PC-9 (cell line): ENCODE measurements at regions of chr17 and their contacts with region 1.

Region 1: GRCh38 chr17:7745748-7746470 is 28.4 kb downstream of the DNAH2 start:
- DNase-seq: peak; percentile 80 to 87
- H3K4me3 ChIP-seq: no peak overlapping the region
- H3K27ac ChIP-seq: peak overlapping the region; percentile 76
- H3K4me1 ChIP-seq: peaks cover 57% of the 10 kb centered on the region
- H3K27me3 ChIP-seq: no peaks in the 10 kb centered on the region
- CTCF ChIP-seq: peak; percentile 28

Region 2: DNA sequence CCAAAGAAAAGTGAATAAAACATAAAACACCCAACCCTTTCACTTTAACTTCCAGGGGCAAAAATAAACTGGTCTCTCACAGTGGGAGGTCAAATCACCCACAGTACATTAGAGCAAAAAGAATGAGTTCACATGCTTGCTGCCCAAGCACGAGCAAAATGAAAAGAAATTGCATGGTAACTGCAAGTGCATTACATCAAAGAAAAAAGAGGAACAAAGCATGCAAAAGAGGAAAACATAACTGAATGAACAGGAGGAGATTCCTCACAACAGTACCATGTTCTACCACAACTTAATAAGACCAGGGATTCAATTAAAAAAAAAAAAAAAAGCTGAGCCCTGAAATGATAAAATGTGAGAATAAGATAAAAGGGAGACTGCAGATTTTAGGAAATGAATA is 16.1 kb before region 1 on chr17:
- CTCF ChIA-PET with region 1: interaction called, 18 read pairs
- POLR2A ChIA-PET with region 1: no interaction called
- intact Hi-C with region 1: no loop called
- DNase-seq: no peak
- H3K4me3 ChIP-seq: no peak overlapping the region
- H3K27ac ChIP-seq: no peak overlapping the region
- H3K4me1 ChIP-seq: no peaks in the 10 kb centered on the region
- H3K27me3 ChIP-seq: no peaks in the 10 kb centered on the region
- CTCF ChIP-seq: no peak

Region 3: DNA sequence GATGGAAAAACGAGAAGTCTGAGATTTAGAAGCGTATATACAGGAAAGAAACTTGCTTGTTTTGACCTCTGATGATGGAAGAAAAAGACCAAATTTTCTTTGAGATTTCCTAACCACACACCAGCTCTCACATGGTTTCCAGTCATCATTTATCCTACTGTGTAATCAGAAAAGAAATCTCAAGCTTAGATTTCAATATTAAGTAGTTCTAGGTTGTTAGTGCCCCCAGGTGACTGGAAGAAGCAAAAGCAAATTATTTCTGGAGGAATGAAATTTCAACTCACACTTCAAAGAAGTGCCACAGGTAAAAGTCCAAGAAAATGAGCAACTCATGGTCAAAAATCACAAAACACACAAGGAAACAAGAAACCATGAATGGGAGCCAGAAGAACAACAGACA is 36.3 kb after region 1 on chr17:
- CTCF ChIA-PET with region 1: interaction called, 7 read pairs
- POLR2A ChIA-PET with region 1: no interaction called
- intact Hi-C with region 1: loop called (anchors 1 kb)
- DNase-seq: peak in 1 of 2 experiments; percentile 42
- H3K4me3 ChIP-seq: no peak overlapping the region
- H3K27ac ChIP-seq: no peak overlapping the region
- H3K4me1 ChIP-seq: no peaks in the 10 kb centered on the region
- H3K27me3 ChIP-seq: no peaks in the 10 kb centered on the region
- CTCF ChIP-seq: peak; percentile 56

Region 4: GRCh38 chr17:7856883-7857723 is 111.2 kb after region 1 on chr17 and contains the start of gene NAA38:
- CTCF ChIA-PET with region 1: no interaction called
- POLR2A ChIA-PET with region 1: no interaction called
- intact Hi-C with region 1: loop called (anchors 1 kb)
- DNase-seq: peak; percentile 96 to 97
- H3K4me3 ChIP-seq: peak within 1 kb of the TSS; percentile 97
- H3K27ac ChIP-seq: peak within 1 kb of the TSS; percentile 79
- H3K4me1 ChIP-seq: peaks cover 13% of the 10 kb centered on the region
- H3K27me3 ChIP-seq: no peaks in the 10 kb centered on the region
- CTCF ChIP-seq: no peak
- total RNA-seq, gene NAA38: 159 and 176 TPM in 2 replicates

Region 5: GRCh38 chr17:7989781-7990655 is 244.1 kb after region 1 on chr17:
- CTCF ChIA-PET with region 1: interaction called, 10 read pairs
- POLR2A ChIA-PET with region 1: no interaction called
- intact Hi-C with region 1: loop called (anchors 1 kb)
- DNase-seq: peak; percentile 40 to 92
- H3K4me3 ChIP-seq: peak overlapping the region; percentile 62
- H3K27ac ChIP-seq: no peak overlapping the region
- H3K4me1 ChIP-seq: no peaks in the 10 kb centered on the region; the same call in 1 of the 2 replicates
- H3K27me3 ChIP-seq: no peaks in the 10 kb centered on the region
- CTCF ChIP-seq: peak; percentile 83

Region 6: GRCh38 chr17:8118769-8119580 is 373.1 kb after region 1 on chr17:
- CTCF ChIA-PET with region 1: no interaction called
- POLR2A ChIA-PET with region 1: no interaction called
- intact Hi-C with region 1: loop called (anchors 5 kb)
- DNase-seq: peak; percentile 67 to 87
- H3K4me3 ChIP-seq: peak overlapping the region; percentile 87
- H3K27ac ChIP-seq: peak overlapping the region; percentile 87
- H3K4me1 ChIP-seq: peaks cover 11% of the 10 kb centered on the region
- H3K27me3 ChIP-seq: no peaks in the 10 kb centered on the region
- CTCF ChIP-seq: peak; percentile 74